Sigmoid colon (tissue), 7 donors: ENCODE measurements at regions of chr12 and their contacts with region 1.

Region 1: DNA sequence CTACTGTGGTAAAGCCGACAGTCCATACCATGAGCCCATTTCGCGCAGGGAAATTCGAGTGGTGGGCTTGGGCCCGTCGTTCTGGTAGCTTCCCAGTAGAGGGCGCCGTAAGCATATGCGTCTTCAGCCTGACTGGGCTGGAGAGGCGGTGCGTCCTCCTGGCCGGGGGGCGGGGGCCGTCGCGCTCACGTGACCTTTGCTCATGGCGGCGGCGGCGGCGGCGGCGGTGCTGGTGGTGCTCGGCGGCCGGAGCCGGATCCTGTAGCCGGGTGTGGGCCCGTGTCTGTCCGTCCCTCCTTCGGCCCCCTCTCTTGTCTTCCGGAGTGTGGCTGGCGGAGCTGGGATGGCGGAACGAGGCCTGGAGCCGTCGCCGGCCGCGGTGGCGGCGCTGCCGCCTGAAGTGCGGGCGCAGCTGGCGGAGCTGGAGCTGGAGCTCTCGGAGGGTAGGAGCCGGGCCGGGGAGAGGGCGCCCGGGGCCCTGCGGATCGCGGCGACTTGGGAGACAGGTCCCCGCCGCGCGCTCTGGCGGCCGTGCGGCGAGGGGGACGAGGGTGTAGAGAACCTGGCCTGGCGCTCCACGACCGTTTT is at the start of gene DIP2B:
- DNase-seq: peak; percentile 98
- H3K4me3 ChIP-seq: peak within 1 kb of the TSS; percentile 69 to 93 (median 92)
- H3K27ac ChIP-seq: peak within 1 kb of the TSS; percentile 92 to 98 (median 97)
- H3K4me1 ChIP-seq: peaks cover 0 to 41% (median 32%) of the 10 kb centered on the region in 4 donors
- H3K27me3 ChIP-seq: no peaks in the 10 kb centered on the region
- CTCF ChIP-seq: peak; percentile 72 to 97 (median 93)
- EP300 ChIP-seq: no peak
- POLR2A ChIP-seq: no peak
- total RNA-seq, gene DIP2B: 16.4 to 28.0 (median 22.0) TPM

Region 2: DNA sequence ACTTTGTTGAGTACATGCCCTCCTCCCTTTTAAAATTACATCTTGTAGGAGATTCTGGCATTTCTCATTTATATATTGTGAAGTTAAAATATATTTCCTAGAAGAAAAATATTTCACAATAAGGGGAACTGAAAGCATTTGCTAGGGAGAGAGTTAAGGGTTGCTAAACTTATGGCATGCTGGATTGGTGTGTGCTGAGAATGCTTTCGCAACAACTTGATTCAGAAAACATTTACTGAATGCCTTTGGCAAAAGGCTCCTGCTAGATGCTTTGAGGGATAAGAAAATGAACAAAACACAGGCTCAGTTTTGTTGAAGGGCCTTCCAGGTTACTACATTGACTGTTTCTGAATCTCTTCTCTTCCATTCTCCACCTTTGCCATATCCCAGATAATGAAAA is 67.4 kb after region 1 on chr12:
- intact Hi-C with region 1: loop called (anchors 10 kb)
- DNase-seq: no peak
- H3K4me3 ChIP-seq: no peak overlapping the region
- H3K27ac ChIP-seq: peak overlapping the region in 3 of 4 donors; percentile 31 to 59 (median 36)
- H3K4me1 ChIP-seq: peaks cover 0 to 71% (median 65%) of the 10 kb centered on the region in 4 donors
- H3K27me3 ChIP-seq: no peaks in the 10 kb centered on the region
- CTCF ChIP-seq: no peak
- EP300 ChIP-seq: no peak
- POLR2A ChIP-seq: no peak

Region 3: GRCh38 chr12:50620109-50620977 is 115.5 kb after region 1 on chr12:
- intact Hi-C with region 1: loop called (anchors 5 kb)
- DNase-seq: no peak
- H3K4me3 ChIP-seq: no peak overlapping the region
- H3K27ac ChIP-seq: peak overlapping the region in 3 of 4 donors; percentile 32 to 78 (median 43)
- H3K4me1 ChIP-seq: peaks cover 0 to 73% (median 52%) of the 10 kb centered on the region in 4 donors
- H3K27me3 ChIP-seq: no peaks in the 10 kb centered on the region
- CTCF ChIP-seq: no peak
- EP300 ChIP-seq: no peak
- POLR2A ChIP-seq: no peak

Region 4: DNA sequence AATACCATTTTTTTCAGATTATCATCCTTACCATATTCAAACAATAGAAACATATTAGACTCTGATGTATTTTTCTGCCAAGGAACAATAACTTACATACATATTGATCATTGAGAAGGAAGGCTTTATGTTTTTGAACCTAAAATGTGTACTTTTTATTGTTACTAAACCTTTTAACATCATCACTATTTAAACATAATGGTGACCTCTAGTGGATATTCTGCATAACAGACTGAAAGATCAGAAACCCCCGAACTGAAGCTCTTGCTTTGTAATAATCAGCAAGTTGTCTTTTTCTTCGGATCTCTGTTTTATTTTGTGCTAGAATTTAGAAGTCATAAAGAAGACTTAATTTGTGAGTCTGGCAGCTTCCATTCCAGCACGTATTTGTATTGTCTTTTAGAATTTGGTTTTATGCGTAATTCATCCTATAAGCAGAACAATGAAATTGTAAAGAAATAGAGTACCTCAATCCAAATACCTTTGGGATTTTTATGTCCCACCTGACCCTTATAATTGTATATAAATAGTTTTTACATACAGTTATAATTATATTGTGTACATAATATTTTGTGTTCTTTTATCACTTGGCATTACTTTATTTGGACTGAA is 133.1 kb after region 1 on chr12:
- intact Hi-C with region 1: loop called (anchors 1 kb)
- DNase-seq: no peak
- H3K4me3 ChIP-seq: no peak overlapping the region
- H3K27ac ChIP-seq: no peak overlapping the region
- H3K4me1 ChIP-seq: peaks cover 0 to 19% (median 8%) of the 10 kb centered on the region in 4 donors
- H3K27me3 ChIP-seq: no peaks in the 10 kb centered on the region
- CTCF ChIP-seq: peak; percentile 39 to 54 (median 52)
- EP300 ChIP-seq: no peak
- POLR2A ChIP-seq: no peak

Region 5: DNA sequence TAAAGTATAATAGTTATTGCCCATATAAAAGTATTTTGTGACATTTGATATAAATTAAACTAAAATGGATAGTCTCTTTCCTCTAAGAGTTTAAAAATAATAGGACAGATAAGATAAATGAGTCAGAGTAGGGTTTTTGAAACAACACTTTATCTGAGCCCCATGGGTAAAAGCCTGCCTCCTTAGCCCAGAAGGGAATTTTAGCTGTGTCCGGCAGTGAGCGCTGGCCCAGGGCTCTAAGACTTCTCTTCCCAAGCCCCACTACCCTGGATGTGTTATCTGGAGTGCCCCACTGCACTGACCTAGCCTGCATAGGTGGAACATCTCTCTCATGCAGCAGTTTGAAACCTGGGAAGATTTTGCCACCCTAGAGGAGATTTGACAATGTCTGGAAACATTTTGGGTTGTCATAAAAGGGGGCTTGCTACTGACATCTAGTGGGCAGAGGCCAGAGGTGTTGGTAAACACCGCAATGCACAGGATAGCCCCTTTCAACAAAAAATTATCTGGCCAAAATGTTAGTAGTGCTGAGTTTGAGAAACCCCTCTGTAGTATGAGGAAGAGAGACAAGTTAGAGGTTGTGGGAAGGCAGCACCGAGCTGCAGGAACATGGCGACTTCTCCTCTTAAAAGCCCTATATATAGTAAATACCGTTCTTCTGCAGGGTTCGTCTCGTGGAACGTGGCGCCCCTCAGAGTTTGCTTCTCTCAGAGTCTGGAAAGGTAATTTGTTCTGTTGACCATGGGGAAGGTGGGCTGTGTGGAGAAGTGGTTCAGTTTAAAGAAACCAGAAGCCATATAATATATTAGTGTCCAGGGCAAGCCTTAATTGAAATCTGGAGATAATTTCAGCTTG is 229.7 kb after region 1 on chr12:
- intact Hi-C with region 1: loop called (anchors 10 kb)
- DNase-seq: no peak
- H3K4me3 ChIP-seq: no peak overlapping the region
- H3K27ac ChIP-seq: no peak overlapping the region
- H3K4me1 ChIP-seq: no peaks in the 10 kb centered on the region
- H3K27me3 ChIP-seq: no peaks in the 10 kb centered on the region
- CTCF ChIP-seq: peak in 2 of 4 experiments; percentile 15 to 40
- EP300 ChIP-seq: no peak
- POLR2A ChIP-seq: no peak